Activated naive CD8-positive, alpha-beta T cell treated with anti-CD3 and anti-CD28 coated beads, Interleukin-2, amount 10 ng/mL, durations not matched to agents 7 days and 5 days (primary cell): ENCODE measurements at regions of chr1 and their contacts with region 1.

Region 1: DNA sequence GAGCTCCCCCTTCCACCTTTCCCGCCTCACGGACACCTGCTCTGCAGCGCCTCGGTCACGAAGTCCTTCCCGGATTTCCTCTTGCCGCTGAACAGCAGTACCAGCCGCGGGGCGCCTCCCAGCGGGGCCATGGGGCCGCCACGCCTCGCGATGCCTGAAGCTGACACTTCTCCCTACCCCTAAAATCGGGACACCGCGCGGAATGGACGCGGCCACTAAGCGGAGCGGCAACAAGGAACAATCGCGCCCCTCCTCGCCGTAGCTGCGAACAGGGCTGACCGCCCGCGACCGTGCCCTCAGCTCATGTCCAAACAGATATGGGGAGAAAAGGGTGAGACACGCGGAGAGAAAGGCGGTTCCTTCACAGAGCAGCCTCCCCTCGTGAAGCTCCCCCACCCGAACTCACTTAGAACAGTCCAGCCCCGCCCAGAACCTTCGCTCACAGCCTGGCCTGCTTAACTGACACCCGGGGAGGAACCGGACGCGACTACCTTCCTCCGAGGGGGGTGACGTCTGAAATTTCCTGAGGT is at the start of gene PMVK:
- DNase-seq: peak; percentile 92
- ATAC-seq: peak; percentile 85
- H3K4me3 Mint-ChIP-seq: peak within 1 kb of the TSS; percentile 90
- H3K27ac Mint-ChIP-seq: peak within 1 kb of the TSS; percentile 97
- H3K4me1 Mint-ChIP-seq: peaks cover 33% of the 10 kb centered on the region
- H3K27me3 Mint-ChIP-seq: no peaks in the 10 kb centered on the region
- total RNA-seq, gene PMVK: 25.6 to 26.4 TPM

Region 2: GRCh38 chr1:154558575-154559465 is 377.8 kb before region 1 on chr1 and contains the start of gene UBE2Q1:
- POLR2A ChIA-PET with region 1: interaction called, 11 read pairs
- DNase-seq: peak; percentile 98
- ATAC-seq: peak; percentile 95
- H3K4me3 Mint-ChIP-seq: peak within 1 kb of the TSS; percentile 93
- H3K27ac Mint-ChIP-seq: peak within 1 kb of the TSS; percentile 96
- H3K4me1 Mint-ChIP-seq: peaks cover 36% of the 10 kb centered on the region
- H3K27me3 Mint-ChIP-seq: no peaks in the 10 kb centered on the region
- total RNA-seq, gene UBE2Q1: 106 to 107 TPM

Region 3: DNA sequence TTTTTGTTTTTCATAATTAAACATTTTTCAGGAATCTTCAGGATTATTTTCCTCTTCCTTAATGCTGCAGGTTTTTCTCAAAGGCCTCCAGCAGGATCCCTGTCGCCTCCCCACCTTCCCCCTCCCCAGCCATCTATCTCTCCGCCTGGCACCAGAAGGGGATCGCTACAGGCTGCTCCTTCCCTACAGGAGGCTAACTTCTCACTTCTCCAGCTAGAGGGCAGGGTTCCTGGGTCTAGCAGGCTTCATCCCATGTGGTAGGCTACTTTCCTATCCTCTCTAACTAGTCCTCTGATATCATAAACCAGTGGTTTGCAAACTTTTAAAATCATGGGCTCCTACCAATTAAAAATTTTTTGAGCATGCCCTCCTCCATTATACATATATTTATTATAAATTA is 170.7 kb before region 1 on chr1:
- POLR2A ChIA-PET with region 1: no interaction called
- DNase-seq: no peak
- ATAC-seq: peak; percentile 56
- H3K4me3 Mint-ChIP-seq: no peak overlapping the region
- H3K27ac Mint-ChIP-seq: no peak overlapping the region
- H3K4me1 Mint-ChIP-seq: peaks cover 5% of the 10 kb centered on the region
- H3K27me3 Mint-ChIP-seq: peaks cover 9% of the 10 kb centered on the region

Region 4: GRCh38 chr1:154863315-154864174 is 73.1 kb before region 1 on chr1:
- POLR2A ChIA-PET with region 1: no interaction called
- DNase-seq: no peak
- ATAC-seq: no peak
- H3K4me3 Mint-ChIP-seq: no peak overlapping the region
- H3K27ac Mint-ChIP-seq: no peak overlapping the region
- H3K4me1 Mint-ChIP-seq: peaks cover 15% of the 10 kb centered on the region
- H3K27me3 Mint-ChIP-seq: peaks cover 23% of the 10 kb centered on the region

Region 5: DNA sequence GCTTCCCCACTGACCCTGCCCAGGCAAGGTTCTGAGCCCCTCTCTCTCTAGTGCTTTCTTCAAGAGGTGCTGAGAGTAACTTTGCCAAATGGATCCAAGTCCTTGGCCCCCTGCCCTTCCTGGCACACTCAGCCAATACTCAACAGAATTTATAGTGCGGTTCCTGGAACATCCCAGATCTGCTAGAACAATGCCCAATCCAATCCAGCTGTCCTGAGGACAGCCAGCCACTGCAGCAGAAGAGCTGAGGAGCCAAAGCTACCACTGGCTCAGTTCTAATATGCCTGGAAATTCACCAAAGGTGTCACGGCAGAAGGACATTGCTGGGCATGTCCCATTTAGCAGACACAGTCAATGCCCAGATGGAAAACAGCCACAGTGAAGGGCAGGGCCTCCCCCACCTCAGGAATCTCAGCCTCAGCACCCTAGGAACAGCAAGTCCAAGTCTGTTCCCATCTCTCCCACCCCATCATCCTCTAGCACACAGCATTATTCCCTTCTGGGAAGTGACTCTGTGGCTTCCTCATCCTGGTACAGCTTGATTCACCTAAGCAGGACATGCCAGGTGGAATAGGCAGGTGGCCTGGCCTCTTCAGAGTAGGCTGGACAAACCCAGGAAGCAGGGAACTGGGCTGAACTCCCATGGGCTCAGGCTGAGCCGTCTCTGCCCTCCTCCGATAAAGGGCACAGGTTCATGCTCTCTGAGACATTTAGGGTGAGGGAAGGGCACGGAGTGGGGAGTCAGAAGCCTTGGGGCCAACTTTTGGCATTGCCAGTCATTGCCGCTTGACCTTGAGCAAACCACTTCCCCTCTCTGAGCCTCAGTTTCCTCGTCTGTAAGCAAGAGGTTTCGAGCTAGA is 24.7 kb before region 1 on chr1:
- POLR2A ChIA-PET with region 1: no interaction called
- DNase-seq: no peak
- ATAC-seq: no peak
- H3K4me3 Mint-ChIP-seq: no peak overlapping the region
- H3K27ac Mint-ChIP-seq: no peak overlapping the region
- H3K4me1 Mint-ChIP-seq: no peaks in the 10 kb centered on the region
- H3K27me3 Mint-ChIP-seq: peaks cover 3% of the 10 kb centered on the region

Region 6: DNA sequence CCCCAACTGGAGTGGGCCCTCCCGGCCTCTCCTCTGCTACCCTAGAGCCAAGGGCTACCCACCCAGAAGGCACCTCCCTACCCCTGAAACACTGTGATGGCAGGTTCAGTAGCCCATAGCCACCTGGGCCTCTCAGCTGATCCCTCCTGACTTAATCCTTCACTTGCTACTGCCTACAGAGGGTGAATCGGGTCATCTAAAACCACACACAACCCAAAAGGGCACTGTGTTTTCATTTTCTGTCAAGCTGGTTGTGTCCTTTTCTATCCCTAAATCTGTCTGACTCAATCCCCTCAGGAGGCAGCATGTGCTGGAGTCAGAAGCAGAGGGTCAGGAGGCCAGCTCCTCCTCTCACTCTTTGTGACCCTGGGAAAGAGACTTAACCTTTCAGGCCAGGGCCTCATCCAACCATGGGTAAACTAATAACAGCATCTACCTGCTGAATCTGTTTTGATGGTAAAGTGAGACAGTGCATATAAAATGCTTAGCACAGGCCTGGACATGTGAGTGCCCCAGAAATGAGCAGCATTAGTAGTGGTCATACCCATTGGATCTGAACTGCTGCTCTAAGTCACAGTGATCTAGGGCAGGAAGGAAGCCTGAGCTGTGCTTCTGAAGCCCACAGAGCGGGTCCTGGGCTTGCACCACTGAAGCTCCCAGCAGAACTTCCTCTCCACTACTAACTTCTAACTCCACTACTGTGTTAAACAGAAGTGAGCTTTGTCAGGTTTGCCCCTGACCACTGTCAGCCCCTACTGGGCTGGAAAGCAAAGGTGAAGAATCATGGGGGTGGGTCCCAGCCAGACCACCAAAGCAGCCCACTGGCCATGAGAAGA is 11.1 kb before region 1 on chr1:
- POLR2A ChIA-PET with region 1: interaction called, 14 read pairs
- DNase-seq: no peak
- ATAC-seq: peak; percentile 95
- H3K4me3 Mint-ChIP-seq: no peak overlapping the region
- H3K27ac Mint-ChIP-seq: peak overlapping the region; percentile 84
- H3K4me1 Mint-ChIP-seq: peaks cover 19% of the 10 kb centered on the region
- H3K27me3 Mint-ChIP-seq: no peaks in the 10 kb centered on the region

Region 7: DNA sequence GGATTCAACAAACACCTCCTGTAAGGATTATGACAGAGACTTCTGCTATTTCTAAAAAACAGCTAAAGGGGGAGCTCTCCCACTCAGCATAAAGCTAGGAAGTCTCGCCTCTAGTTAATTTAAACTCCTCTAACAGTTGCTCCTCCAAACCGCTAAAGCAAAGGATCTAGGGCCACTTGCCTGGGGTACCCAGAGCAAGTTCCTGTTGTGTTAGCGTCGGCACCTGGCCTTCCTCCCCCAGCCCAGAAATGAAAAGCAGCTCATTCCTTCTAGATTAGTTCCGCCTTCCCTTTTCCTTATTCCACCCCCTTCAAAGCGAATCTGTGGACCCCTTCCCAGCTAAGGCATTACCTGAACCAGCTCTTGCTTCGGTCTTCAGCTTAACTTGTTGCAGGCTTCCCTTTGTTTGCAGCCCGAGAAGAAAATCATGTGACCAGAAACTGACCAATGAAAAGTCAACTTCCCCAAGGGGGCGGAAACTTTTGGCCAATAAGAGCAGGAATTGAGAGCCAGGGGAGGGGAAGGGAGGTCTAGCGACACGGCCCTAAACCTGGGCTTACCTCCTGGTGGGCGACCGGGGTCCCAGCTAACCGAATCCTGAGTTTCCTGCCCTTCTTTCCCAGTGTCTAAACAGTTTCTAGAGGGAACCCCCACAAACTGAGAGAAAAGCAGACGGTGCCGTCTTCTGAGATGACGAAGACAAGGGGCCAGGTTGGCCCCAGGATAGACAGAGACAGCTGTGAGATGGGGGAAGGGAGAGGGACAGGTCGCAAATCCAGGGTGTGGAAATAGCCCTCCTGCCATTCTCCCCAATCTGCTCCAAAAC is 19.3 kb after region 1 on chr1 and contains the start of gene PBXIP1:
- POLR2A ChIA-PET with region 1: interaction called, 45 read pairs
- DNase-seq: peak; percentile 69
- ATAC-seq: peak; percentile 48
- H3K4me3 Mint-ChIP-seq: peak within 1 kb of the TSS; percentile 97
- H3K27ac Mint-ChIP-seq: peak within 1 kb of the TSS; percentile 99
- H3K4me1 Mint-ChIP-seq: peaks cover 60% of the 10 kb centered on the region
- H3K27me3 Mint-ChIP-seq: no peaks in the 10 kb centered on the region
- total RNA-seq, gene PBXIP1: 149 to 155 TPM

Region 8: GRCh38 chr1:154961497-154962262 is 25.1 kb after region 1 on chr1 and contains the start of gene PYGO2:
- POLR2A ChIA-PET with region 1: interaction called, 45 read pairs
- DNase-seq: peak; percentile 90
- ATAC-seq: peak; percentile 80
- H3K4me3 Mint-ChIP-seq: peak within 1 kb of the TSS; percentile 94
- H3K27ac Mint-ChIP-seq: peak within 1 kb of the TSS; percentile 90
- H3K4me1 Mint-ChIP-seq: peaks cover 24% of the 10 kb centered on the region
- H3K27me3 Mint-ChIP-seq: no peaks in the 10 kb centered on the region
- total RNA-seq, gene PYGO2: 55.3 TPM

Region 9: GRCh38 chr1:154974063-154974807 is 37.6 kb after region 1 on chr1 and contains the start of gene CKS1B:
- POLR2A ChIA-PET with region 1: interaction called, 20 read pairs
- DNase-seq: peak; percentile 92
- ATAC-seq: peak; percentile 89
- H3K4me3 Mint-ChIP-seq: no peak within 1 kb of the TSS
- H3K27ac Mint-ChIP-seq: no peak within 1 kb of the TSS
- H3K4me1 Mint-ChIP-seq: peaks cover 37% of the 10 kb centered on the region
- H3K27me3 Mint-ChIP-seq: no peaks in the 10 kb centered on the region
- total RNA-seq, gene CKS1B: 112 to 114 TPM